Heart right ventricle (tissue), 16 donors: ENCODE measurements at regions of chr12 and their contacts with region 1.

Region 1: GRCh38 chr12:27243804-27244683 is at the start of gene STK38L:
- DNase-seq: peak; percentile 98
- ATAC-seq: peak; percentile 98 to 100 (median 98)
- H3K4me3 ChIP-seq: peak within 1 kb of the TSS; percentile 62 to 94 (median 81)
- H3K27ac ChIP-seq: peak within 1 kb of the TSS; percentile 73 to 95 (median 92)
- H3K4me1 ChIP-seq: peaks cover 0 to 39% (median 33%) of the 10 kb centered on the region in 9 donors
- H3K27me3 ChIP-seq: no peaks in the 10 kb centered on the region
- CTCF ChIP-seq: peak in 8 of 9 donors; percentile 8 to 49 (median 34)
- total RNA-seq, gene STK38L: 40.7 to 165 (median 104) TPM

Region 2: GRCh38 chr12:26937875-26938700 is 306.0 kb before region 1 on chr12 and contains the starts of genes FGFR1OP2 and INTS13:
- intact Hi-C with region 1: loop called in 1 of 10 experiments (anchors 10 kb)
- DNase-seq: peak; percentile 99 to 100
- ATAC-seq: peak; percentile 97 to 99 (median 98)
- H3K4me3 ChIP-seq: peak within 1 kb of the TSS; percentile 60 to 92 (median 86)
- H3K27ac ChIP-seq: peak within 1 kb of the TSS; percentile 86 to 99 (median 96)
- H3K4me1 ChIP-seq: peaks cover 0 to 71% (median 62%) of the 10 kb centered on the region in 9 donors
- H3K27me3 ChIP-seq: no peaks in the 10 kb centered on the region
- CTCF ChIP-seq: no peak
- total RNA-seq, gene FGFR1OP2: 22.3 to 37.9 (median 27.3) TPM
- total RNA-seq, gene INTS13: 14.1 to 22.2 (median 17.8) TPM

Region 3: GRCh38 chr12:27024291-27024690 is 219.8 kb before region 1 on chr12:
- intact Hi-C with region 1: loop called in 3 of 10 experiments (anchors 10 kb)
- DNase-seq: no peak
- ATAC-seq: no peak
- H3K4me3 ChIP-seq: peak overlapping the region in 2 of 10 donors; percentile 62 to 79
- H3K27ac ChIP-seq: no peak overlapping the region
- H3K4me1 ChIP-seq: peaks cover 6 to 34% (median 18%) of the 10 kb centered on the region in 9 donors
- H3K27me3 ChIP-seq: no peaks in the 10 kb centered on the region
- CTCF ChIP-seq: no peak

Region 4: DNA sequence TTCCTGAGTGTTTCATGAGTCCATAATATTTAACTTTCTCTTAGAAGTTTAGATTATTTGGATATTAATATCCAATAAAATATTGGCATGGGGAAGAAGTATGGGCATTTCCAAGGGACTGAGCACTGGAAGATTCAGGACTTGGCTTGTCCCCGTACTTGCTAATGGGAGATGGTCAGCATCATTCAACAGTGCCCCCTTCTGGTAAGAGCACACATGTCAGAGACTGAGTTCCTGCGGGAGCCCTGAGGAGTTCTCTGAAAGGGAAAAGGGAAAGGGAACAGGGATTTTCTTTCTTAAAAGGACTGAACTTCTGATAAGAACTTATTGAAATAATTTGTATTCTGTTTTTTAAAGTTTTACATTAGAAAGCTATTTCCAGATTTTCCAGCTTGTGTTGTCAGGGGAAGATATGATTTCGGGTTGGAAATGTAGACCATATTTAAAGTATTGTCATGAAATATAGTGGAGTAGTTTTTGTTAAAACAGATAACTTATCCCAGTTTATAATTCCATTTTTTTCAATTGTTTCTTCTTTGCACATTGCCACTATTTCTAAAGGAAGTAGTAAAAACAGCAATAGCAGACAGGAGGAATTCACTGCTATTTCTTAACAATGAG is 101.8 kb before region 1 on chr12:
- intact Hi-C with region 1: loop called in 2 of 10 experiments (anchors 5 to 10 kb)
- DNase-seq: peak in 1 of 2 donors; percentile 80
- ATAC-seq: peak; percentile 76 to 95 (median 94)
- H3K4me3 ChIP-seq: no peak overlapping the region
- H3K27ac ChIP-seq: peak overlapping the region in 1 of 10 donors; percentile 41
- H3K4me1 ChIP-seq: peaks cover 0 to 24% (median 8%) of the 10 kb centered on the region in 9 donors
- H3K27me3 ChIP-seq: no peaks in the 10 kb centered on the region
- CTCF ChIP-seq: peak; percentile 59 to 93 (median 82)

Region 5: DNA sequence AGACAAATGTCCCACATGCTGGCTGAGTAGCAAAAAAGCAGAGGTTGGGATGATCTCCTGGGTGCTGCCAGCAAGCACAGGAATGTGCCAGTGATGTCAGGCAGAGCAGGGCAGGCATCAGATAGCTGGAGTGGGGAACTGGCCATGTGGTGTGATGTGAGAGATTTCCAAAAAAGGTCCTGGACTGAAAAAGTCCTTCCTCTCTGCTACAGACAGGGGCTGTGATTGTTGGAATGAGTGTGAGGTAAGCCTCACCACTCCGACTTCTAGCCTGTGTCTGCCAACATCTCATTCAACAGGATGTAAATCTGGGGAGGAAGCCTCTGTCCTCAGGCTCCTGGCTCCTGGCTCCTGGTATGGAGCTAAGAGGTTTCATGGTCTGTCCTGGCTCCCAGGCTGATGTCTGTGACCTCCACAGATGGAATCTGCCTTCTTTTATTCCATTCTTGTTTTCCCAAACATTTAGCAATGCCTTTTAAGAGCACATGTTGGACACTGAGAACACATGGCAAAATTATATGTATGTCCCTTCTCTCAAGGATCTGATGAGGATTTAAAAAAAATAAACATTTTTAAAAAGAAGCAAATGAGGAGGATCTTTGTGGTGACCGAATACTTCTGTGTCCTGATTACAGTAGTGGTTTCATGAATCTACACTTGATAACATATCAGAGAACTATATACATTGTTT is 50.0 kb before region 1 on chr12:
- intact Hi-C with region 1: loop called in 3 of 10 experiments (anchors 5 kb)
- DNase-seq: peak; percentile 36 to 63
- ATAC-seq: peak; percentile 81 to 93 (median 90)
- H3K4me3 ChIP-seq: no peak overlapping the region
- H3K27ac ChIP-seq: peak overlapping the region; percentile 30 to 87 (median 76)
- H3K4me1 ChIP-seq: peaks cover 2 to 58% (median 27%) of the 10 kb centered on the region in 9 donors
- H3K27me3 ChIP-seq: no peaks in the 10 kb centered on the region
- CTCF ChIP-seq: peak in 3 of 9 donors; percentile 16 to 25 (median 19)

Region 6: DNA sequence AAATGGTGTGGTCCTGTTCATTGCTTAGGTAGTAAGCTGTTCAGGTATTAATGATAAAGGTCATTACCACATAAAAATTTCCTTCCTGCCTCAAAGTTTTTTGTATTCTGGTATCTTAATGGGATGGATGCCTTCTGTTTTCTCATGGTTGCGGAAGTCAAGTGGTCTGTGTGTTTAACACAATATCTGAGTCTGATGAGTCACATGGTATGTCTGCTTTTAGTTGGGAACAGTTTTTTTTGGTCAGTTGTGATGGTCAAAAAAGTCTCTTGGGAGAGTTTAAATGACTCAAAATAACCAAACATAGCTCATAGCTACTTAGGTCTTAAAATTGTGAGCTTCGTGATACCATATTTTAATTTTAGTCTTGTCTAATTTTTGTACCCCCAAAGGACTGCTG is 40.7 kb after region 1 on chr12:
- intact Hi-C with region 1: loop called in 3 of 10 experiments (anchors 5 kb)
- DNase-seq: peak in 1 of 2 donors; percentile 19
- ATAC-seq: peak; percentile 56 to 83 (median 79)
- H3K4me3 ChIP-seq: no peak overlapping the region
- H3K27ac ChIP-seq: peak overlapping the region in 9 of 10 donors; percentile 20 to 80 (median 67)
- H3K4me1 ChIP-seq: peaks cover 0 to 83% (median 57%) of the 10 kb centered on the region in 9 donors
- H3K27me3 ChIP-seq: no peaks in the 10 kb centered on the region
- CTCF ChIP-seq: no peak

Region 7: DNA sequence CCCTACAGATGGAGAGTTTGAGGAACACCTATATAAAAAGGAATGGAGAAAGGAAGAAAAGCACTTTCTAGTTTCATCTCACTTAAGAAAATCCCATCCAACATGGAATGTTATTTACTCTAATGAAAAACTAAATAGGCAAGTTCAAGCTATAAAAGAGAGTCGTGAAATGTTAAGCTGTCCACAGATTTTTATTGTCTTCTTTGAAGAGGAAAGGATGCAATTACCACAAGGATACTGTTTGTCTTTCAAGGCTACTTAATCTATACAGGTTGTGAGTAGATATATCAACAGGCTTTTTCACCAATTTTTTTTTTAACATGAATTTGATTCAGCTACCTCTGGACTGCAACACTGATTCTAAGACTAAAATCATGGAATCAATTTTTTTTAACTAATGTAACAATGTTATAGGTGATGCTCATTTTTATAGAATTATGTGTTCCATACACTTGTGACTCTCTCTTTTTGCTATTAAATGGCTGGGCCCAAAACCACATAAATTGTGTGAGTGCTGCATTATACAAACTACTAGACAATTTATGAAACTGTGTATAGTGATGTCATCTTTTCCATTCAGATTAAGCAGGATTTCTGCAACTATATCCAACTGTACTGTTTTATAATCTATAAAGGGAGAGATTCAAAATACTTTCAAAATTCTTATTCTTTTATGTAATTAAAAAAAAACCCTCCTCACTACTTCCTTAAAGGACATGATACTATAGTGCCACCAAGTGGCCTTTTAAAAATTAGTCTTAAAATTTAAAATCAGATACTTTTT is 61.8 kb after region 1 on chr12:
- intact Hi-C with region 1: loop called in 2 of 10 experiments (anchors 2 to 5 kb)
- DNase-seq: no peak
- ATAC-seq: peak in 4 of 8 donors; percentile 33 to 67 (median 46)
- H3K4me3 ChIP-seq: no peak overlapping the region
- H3K27ac ChIP-seq: peak overlapping the region in 4 of 10 donors; percentile 16 to 43 (median 34)
- H3K4me1 ChIP-seq: peaks cover 0 to 28% (median 6%) of the 10 kb centered on the region in 9 donors
- H3K27me3 ChIP-seq: no peaks in the 10 kb centered on the region
- CTCF ChIP-seq: peak; percentile 55 to 80 (median 71)

Region 8: DNA sequence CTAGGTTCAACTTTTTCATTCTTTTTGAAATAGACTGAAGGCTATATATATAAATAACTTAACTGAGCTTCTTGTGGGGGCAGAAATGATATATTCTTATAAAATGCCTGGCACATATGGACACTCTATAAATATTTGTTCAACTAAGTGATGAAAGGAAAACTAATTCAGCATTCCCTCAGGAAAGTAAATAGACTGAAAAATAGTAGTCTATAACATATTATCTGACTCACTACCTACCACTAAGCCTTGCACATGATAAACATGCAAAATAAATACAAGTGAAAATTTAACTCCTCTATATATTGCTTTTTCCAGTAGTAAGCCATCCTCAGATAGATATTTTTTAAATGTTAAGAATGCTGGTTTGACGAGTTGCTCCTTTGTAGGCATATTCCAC is 72.9 kb after region 1 on chr12:
- intact Hi-C with region 1: no loop called
- DNase-seq: no peak
- ATAC-seq: no peak
- H3K4me3 ChIP-seq: no peak overlapping the region
- H3K27ac ChIP-seq: no peak overlapping the region
- H3K4me1 ChIP-seq: no peaks in the 10 kb centered on the region
- H3K27me3 ChIP-seq: no peaks in the 10 kb centered on the region
- CTCF ChIP-seq: no peak

Region 9: DNA sequence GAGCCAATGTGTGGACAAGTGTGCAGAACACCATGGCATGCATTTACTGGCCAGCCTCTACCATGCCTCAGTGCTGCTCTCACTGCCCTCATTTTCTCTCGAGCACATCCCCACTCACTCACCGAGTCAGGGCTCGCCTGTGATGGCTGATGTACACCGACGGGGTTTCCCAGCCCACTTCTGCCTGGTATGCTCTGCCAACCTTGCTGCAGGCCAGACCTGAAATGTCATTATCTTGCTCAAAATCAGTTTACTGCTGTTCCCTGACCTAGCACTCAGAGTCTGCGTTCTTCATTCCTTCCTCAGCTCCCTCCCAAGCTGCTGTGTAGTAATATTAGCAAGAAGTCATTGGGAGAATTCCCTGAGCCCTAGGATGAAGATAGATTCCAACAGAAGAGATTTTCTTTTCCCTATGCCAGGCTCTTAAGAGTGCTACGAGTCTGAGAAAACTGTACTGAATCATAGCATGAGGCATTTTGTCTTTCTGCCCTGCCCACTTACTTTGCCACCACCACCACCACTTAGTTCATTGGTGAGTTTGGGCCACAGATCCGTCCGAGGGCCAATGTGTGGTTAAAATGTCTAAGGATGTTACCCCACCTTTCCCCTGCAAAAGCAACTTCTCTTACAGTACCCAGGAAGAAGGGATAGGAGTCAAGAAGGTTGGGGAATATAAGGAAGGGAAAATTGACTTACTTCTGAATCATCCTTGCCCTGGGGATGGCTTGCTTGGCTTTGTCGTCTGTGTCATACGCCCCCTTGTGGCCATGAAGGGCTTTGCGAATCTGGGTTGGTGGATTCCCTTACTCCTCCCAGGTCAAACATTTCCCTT is 139.6 kb after region 1 on chr12:
- intact Hi-C with region 1: no loop called
- DNase-seq: peak; percentile 61 to 74
- ATAC-seq: peak in 6 of 8 donors; percentile 38 to 76 (median 62)
- H3K4me3 ChIP-seq: no peak overlapping the region
- H3K27ac ChIP-seq: no peak overlapping the region
- H3K4me1 ChIP-seq: no peaks in the 10 kb centered on the region
- H3K27me3 ChIP-seq: no peaks in the 10 kb centered on the region
- CTCF ChIP-seq: peak; percentile 79 to 92 (median 83)